Lower lobe of right lung (tissue), 2 donors: ENCODE measurements at regions of chr1 and their contacts with region 1.

Region 1: DNA sequence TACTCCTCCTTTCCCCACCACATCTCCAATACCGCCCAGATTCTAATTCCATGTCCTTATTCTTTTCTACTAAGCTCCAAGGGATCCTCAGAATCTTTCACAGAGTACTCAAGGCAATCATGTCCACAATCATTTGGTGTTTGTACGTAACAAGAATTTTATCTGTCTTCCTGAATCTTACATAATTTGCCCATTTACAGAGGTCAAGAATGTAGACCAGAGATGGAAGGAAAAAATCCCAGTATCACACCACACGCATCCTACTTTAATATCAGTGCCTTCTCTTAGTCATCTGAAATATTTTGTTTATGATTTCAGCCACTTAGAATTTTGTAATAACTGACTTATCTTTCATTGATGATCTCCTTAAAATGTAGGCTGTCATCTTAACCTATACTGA is 366.0 kb upstream of the LRRC7 start:
- DNase-seq: no peak
- ATAC-seq: no peak
- H3K4me3 ChIP-seq: no peak overlapping the region
- H3K27ac ChIP-seq: no peak overlapping the region
- H3K4me1 ChIP-seq: no peaks in the 10 kb centered on the region
- H3K27me3 ChIP-seq: no peaks in the 10 kb centered on the region
- CTCF ChIP-seq: no peak

Region 2: GRCh38 chr1:68994096-68994495 is 207.6 kb before region 1 on chr1:
- intact Hi-C with region 1: loop called (anchors 5 kb)
- DNase-seq: no peak
- ATAC-seq: no peak
- H3K4me3 ChIP-seq: no peak overlapping the region
- H3K27ac ChIP-seq: no peak overlapping the region
- H3K4me1 ChIP-seq: no peaks in the 10 kb centered on the region
- H3K27me3 ChIP-seq: no peaks in the 10 kb centered on the region
- CTCF ChIP-seq: no peak